CD8-positive, alpha-beta memory T cell (primary cell): ENCODE measurements at regions of chr9 and their contacts with region 1.

Region 1: DNA sequence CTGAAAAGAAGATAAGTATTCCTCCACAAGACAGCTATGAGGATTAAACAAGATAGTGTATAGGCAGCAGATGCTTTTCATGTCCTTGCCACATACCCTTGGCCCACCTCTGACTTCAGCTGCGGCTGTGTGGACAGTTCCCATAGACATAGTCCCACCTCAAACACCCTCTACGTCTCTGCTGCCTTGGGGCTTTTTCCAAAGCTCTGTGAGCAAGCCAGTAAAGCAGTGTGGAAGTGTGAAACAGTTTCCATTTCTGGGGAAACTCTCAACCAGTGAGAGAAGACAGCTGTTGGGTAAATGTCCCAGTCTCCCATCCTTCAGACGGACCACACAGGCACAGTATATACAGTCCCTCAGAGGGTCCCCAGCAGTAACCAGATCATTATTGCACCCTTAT is 125.5 kb downstream of the CDK5RAP2 start:
- DNase-seq: no peak
- H3K4me3 ChIP-seq: no peak overlapping the region
- H3K4me3 Mint-ChIP-seq: no peak overlapping the region
- H3K27ac ChIP-seq: no peak overlapping the region
- H3K27ac Mint-ChIP-seq: no peak overlapping the region
- H3K4me1 ChIP-seq: no peaks in the 10 kb centered on the region
- H3K4me1 Mint-ChIP-seq: peaks cover 0 to 7% (median 0%) of the 10 kb centered on the region in 3 donors
- H3K27me3 ChIP-seq: no peaks in the 10 kb centered on the region
- H3K27me3 Mint-ChIP-seq: no peaks in the 10 kb centered on the region

Region 2: DNA sequence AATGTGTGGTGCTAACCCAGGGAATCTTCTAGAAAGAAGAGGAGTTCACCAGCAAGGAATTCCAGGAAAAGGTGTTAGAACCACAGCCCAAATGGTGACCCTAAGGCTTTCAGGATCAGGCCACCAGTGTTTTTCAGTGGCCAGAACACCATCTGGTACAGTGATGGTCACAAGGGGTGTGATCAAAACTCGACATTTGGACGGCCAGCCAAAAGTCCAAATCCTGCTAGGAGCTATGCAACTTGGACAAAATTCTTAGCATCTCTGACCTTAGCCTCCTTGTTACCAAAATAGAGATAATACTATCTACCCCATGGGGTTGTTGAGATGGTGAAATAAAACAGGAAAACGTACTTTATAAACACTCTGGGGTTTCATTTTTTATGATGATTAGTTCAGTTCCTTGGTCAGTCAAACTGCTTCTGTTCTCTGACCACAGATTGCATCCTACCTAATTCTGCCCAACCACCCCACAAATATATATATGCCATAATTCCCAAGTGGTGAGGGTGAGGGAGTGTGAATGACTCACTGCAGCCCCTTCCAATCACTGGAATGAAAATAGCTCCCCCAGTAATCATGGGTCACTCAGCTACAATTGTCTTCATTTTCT is 84.8 kb before region 1 on chr9:
- CTCF ChIA-PET with region 1: no interaction called
- POLR2A ChIA-PET with region 1: no interaction called
- DNase-seq: no peak
- H3K4me3 ChIP-seq: no peak overlapping the region
- H3K4me3 Mint-ChIP-seq: no peak overlapping the region
- H3K27ac ChIP-seq: no peak overlapping the region
- H3K27ac Mint-ChIP-seq: no peak overlapping the region
- H3K4me1 ChIP-seq: no peaks in the 10 kb centered on the region
- H3K4me1 Mint-ChIP-seq: no peaks in the 10 kb centered on the region
- H3K27me3 ChIP-seq: no peaks in the 10 kb centered on the region
- H3K27me3 Mint-ChIP-seq: no peaks in the 10 kb centered on the region

Region 3: DNA sequence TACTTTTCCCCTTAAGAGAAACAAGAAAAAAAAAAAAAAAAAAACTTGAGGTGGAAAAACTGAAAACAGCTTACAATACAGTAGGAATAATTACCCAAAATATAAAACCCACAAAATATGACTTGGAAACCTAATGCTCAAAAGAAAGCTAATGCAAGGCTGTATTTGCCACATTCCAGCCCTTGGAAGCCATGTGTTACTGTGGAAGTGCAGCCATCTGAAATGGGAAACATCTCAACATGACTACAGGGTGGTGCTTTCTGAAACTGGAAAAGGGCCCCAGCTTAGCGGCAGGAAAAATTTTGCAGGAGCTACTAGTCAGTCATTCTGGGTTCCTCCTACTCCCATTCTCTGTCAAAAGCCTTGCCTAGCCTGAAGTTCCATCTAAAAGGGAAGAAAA is 105.1 kb after region 1 on chr9:
- CTCF ChIA-PET with region 1: no interaction called
- POLR2A ChIA-PET with region 1: interaction called, 10 read pairs
- DNase-seq: no peak
- H3K4me3 ChIP-seq: no peak overlapping the region
- H3K4me3 Mint-ChIP-seq: no peak overlapping the region
- H3K27ac ChIP-seq: no peak overlapping the region
- H3K27ac Mint-ChIP-seq: peak overlapping the region in 2 of 8 donors; percentile 2 to 35
- H3K4me1 ChIP-seq: no peaks in the 10 kb centered on the region
- H3K4me1 Mint-ChIP-seq: peaks cover 23 to 35% (median 31%) of the 10 kb centered on the region in 3 donors
- H3K27me3 ChIP-seq: no peaks in the 10 kb centered on the region
- H3K27me3 Mint-ChIP-seq: no peaks in the 10 kb centered on the region